Adrenal gland (tissue), 19 donors: ENCODE measurements at regions of chr13 and their contacts with region 1.

Region 1: DNA sequence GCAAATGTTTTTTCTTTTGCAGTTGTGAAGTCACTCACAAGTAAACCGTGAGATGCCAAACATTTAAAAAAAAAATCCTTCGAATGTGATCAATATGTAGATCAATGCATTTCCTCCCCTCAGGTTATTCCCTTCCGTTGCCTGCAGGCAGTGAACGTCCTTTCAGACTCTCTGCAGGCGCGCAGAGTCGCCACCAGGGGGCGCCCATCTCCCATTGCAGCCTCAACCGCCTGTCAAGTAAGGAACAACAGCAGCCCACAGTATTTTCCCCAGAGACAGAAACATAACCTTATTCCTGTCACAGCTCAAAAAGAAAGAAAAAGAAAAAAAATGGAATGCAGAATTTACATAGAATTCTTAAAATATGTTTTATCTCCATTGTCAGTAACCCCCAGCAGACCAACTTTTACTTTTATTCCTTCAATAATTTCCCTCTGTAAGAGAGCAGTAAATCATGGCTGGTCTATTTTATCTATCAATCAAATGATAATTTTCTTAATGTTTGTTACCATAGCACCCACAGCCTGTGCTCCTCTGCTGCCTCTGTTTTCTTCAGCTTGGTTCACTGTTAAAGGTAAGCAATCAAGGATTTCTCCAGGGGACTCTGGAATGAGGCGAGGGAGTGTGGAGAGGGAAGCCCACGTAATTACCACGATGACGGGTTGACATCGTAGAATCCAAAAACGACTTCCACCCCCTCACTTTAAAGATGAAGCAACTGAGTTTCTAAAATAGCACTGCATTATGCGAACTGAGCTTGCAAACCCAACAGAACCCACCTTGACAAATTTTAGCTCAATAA is 637.6 kb upstream of the ARGLU1 start:
- DNase-seq: peak; percentile 42 to 89 (median 62)
- H3K4me3 ChIP-seq: no peak overlapping the region
- H3K27ac ChIP-seq: no peak overlapping the region
- H3K4me1 ChIP-seq: no peaks in the 10 kb centered on the region
- H3K27me3 ChIP-seq: no peaks in the 10 kb centered on the region
- CTCF ChIP-seq: peak; percentile 71 to 98 (median 87)
- POLR2A ChIP-seq: no peak

Region 2: DNA sequence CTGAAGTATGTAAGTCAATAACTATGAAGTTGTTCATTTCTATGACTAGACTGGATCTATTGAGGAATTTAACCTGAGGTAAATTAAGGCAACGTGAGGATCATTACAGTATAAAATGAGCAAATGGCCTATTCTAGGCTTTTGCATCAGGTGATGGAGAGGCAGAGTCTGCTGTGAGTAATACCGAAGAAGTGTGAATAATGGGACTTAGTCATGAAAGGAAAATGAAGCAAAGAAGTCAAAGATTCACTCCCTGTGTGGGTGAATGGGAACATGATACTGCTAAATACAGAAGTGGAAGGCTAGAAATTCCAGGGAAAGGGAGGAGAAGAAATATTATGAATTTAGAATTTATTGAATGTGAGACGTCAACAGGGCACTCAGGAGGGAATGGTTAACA is 235.8 kb after region 1 on chr13:
- intact Hi-C with region 1: no loop called
- DNase-seq: no peak
- H3K4me3 ChIP-seq: no peak overlapping the region
- H3K27ac ChIP-seq: no peak overlapping the region
- H3K4me1 ChIP-seq: no peaks in the 10 kb centered on the region
- H3K27me3 ChIP-seq: no peaks in the 10 kb centered on the region
- CTCF ChIP-seq: no peak
- POLR2A ChIP-seq: no peak

Region 3: DNA sequence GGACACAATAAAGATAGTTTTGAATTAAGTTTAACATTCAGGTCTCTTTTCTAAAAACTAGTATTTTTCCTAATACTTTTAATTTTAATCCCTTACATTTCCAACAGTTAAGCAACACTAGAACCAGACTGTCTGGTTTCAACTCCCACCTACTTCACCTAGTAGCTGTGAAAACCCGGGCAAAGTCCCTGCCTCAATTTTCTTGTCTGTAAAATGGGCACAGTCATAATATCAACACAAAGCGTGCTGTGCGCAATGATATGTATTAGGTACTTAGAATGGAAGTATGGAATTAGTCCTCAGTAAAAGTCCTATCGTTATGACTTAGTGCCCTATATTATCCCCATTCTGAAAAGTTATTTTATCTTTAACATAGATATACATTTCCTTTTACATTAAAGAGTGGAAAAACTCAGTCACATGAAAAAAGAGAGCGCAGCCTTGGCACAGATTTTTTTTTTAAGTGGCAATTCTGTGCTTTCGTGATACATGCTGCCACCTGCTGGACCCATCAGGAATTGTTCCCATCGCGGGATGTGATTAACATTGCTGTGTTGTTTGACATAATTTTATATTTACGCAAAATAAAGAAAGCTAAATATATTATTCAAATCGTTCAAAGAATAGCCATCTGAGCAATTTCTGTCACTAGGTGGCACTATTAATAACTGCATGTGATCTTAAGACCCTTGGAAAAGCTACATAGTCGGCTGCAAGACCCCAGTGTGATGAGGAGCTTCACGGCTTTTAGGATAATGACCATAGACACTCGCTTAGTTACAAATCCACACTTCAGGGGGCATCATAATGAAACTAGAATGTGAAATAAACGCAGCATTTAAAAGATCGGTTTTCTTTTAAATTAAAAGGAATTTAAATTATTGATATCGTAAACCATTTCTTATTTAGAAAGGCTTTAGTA is 949.9 kb after region 1 on chr13:
- intact Hi-C with region 1: loop called (anchors 10 kb)
- DNase-seq: peak; percentile 20 to 81 (median 45)
- H3K4me3 ChIP-seq: no peak overlapping the region
- H3K27ac ChIP-seq: no peak overlapping the region
- H3K4me1 ChIP-seq: no peaks in the 10 kb centered on the region
- H3K27me3 ChIP-seq: no peaks in the 10 kb centered on the region
- CTCF ChIP-seq: peak; percentile 54 to 83 (median 60)
- POLR2A ChIP-seq: no peak